ENCODE measurements at regions of chr6 and their contacts with region 1.

Region 1: GRCh38 chr6:13908955-13909381 is 15.8 kb upstream of the RNF182 start:
- DNase-seq: no peak
- ATAC-seq: peak; percentile 80
- H3K4me3 Mint-ChIP-seq: no peak overlapping the region
- H3K27ac Mint-ChIP-seq: no peak overlapping the region
- H3K4me1 Mint-ChIP-seq: peaks cover 5% of the 10 kb centered on the region
- H3K27me3 Mint-ChIP-seq: peaks cover 4% of the 10 kb centered on the region
- CTCF ChIP-seq: peak; percentile 91

Region 2: GRCh38 chr6:13924146-13924948 is 15.4 kb after region 1 on chr6:
- CTCF ChIA-PET with region 1: interaction called, 12 read pairs
- POLR2A ChIA-PET with region 1: interaction called, 3 read pairs
- intact Hi-C with region 1: no loop called
- DNase-seq: peak; percentile 46
- ATAC-seq: peak; percentile 80
- H3K4me3 Mint-ChIP-seq: peak overlapping the region; percentile 77
- H3K27ac Mint-ChIP-seq: peak overlapping the region; percentile 5
- H3K4me1 Mint-ChIP-seq: peaks cover 16% of the 10 kb centered on the region
- H3K27me3 Mint-ChIP-seq: peaks cover 54% of the 10 kb centered on the region
- CTCF ChIP-seq: no peak

Region 3: DNA sequence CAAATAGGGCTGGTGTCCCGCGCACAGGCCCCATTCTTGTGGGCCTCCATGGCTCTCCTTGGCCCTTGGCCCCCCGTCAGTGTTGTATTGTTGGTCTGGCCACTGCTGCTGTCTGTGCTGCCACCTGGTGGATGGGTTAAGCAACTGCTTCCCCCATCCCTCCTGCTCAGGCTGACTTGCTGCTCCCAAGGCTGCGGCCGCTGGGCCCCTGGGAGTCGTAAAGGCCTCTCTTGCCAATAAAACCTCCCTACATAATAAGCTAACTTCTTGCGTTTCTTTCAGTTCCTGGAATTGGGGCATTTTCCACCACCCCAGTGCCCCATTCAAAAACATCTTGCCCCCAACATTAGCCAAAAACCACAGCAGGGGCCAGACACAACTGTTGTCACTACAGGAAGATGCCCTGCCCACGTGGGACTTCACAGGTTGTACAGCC is 235.7 kb after region 1 on chr6:
- CTCF ChIA-PET with region 1: interaction called, 92 read pairs
- POLR2A ChIA-PET with region 1: interaction called, 4 read pairs
- intact Hi-C with region 1: loop called (anchors 1 kb)
- DNase-seq: peak; percentile 63
- ATAC-seq: peak; percentile 84
- H3K4me3 Mint-ChIP-seq: peak overlapping the region; percentile 20
- H3K27ac Mint-ChIP-seq: peak overlapping the region; percentile 62
- H3K4me1 Mint-ChIP-seq: peaks cover 42% of the 10 kb centered on the region
- H3K27me3 Mint-ChIP-seq: no peaks in the 10 kb centered on the region
- CTCF ChIP-seq: peak; percentile 57

Region 4: GRCh38 chr6:15441215-15441868 is 1532.4 kb after region 1 on chr6:
- CTCF ChIA-PET with region 1: no interaction called
- POLR2A ChIA-PET with region 1: no interaction called
- intact Hi-C with region 1: loop called (anchors 5 kb)
- DNase-seq: no peak
- ATAC-seq: peak; percentile 71
- H3K4me3 Mint-ChIP-seq: no peak overlapping the region
- H3K27ac Mint-ChIP-seq: peak overlapping the region; percentile 5
- H3K4me1 Mint-ChIP-seq: peaks cover 67% of the 10 kb centered on the region
- H3K27me3 Mint-ChIP-seq: no peaks in the 10 kb centered on the region
- CTCF ChIP-seq: no peak

Region 5: GRCh38 chr6:15491255-15491985 is 1582.5 kb after region 1 on chr6:
- CTCF ChIA-PET with region 1: interaction called, 3 read pairs
- POLR2A ChIA-PET with region 1: no interaction called
- intact Hi-C with region 1: loop called (anchors 1 kb)
- DNase-seq: peak; percentile 35
- ATAC-seq: peak; percentile 82
- H3K4me3 Mint-ChIP-seq: no peak overlapping the region
- H3K27ac Mint-ChIP-seq: no peak overlapping the region
- H3K4me1 Mint-ChIP-seq: peaks cover 32% of the 10 kb centered on the region
- H3K27me3 Mint-ChIP-seq: no peaks in the 10 kb centered on the region
- CTCF ChIP-seq: peak; percentile 95